HCT116 (cell line): ENCODE measurements at regions of chr17 and their contacts with region 1.

Region 1: DNA sequence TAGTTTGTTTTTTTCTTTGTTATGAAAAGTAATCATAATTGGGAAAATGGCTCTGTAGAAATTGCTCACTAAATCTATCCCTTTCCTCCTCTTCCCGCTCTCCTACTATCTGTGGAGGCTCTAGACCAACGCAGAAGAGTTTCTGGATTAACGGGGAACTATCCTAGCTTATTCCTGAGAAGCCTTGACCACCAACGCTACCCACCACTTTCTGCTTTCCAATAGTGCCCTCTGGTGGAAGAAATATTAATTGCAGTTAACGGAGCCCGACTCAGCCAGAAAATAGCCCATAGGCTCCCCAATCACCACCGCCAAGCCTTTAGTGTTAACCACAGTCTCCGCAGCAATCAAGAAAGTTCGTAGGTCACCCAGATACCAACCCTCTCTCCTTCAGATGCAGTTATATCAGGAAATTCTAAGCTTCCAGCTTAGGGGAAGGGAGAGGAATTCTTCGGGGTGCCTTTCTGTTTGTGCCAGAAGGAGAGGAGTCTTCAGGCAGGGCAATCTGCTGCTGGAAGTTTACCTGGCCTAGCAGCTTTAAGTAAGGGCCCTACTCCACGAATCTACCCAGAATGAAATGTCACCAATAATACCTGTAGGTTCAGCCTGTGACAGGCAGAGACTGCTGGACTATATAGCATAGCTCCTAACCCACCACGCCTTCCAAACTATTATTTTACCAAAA is 23.0 kb upstream of the NSRP1 start:
- DNase-seq: peak; percentile 54
- ATAC-seq: peak; percentile 86
- H3K4me3 ChIP-seq: no peak overlapping the region
- H3K27ac ChIP-seq: no peak overlapping the region
- H3K4me1 ChIP-seq: peaks cover 0 to 32% of the 10 kb centered on the region in 2 experiments; a peak in 2 of 4 replicates
- H3K27me3 ChIP-seq: no peaks in the 10 kb centered on the region
- CTCF ChIP-seq: peak; percentile 62 to 91 (median 85)
- POLR2A ChIP-seq: no peak
- RAD21 ChIP-seq: peak; percentile 93

Region 2: GRCh38 chr17:29237476-29238132 is 856.0 kb before region 1 on chr17:
- CTCF ChIA-PET with region 1: no interaction called
- POLR2A ChIA-PET with region 1: no interaction called
- RAD21 ChIA-PET with region 1: no interaction called
- intact Hi-C with region 1: no loop called
- DNase-seq: peak; percentile 51
- ATAC-seq: no peak
- H3K4me3 ChIP-seq: no peak overlapping the region
- H3K27ac ChIP-seq: no peak overlapping the region
- H3K4me1 ChIP-seq: peaks cover 21 to 35% of the 10 kb centered on the region in 2 experiments
- H3K27me3 ChIP-seq: no peaks in the 10 kb centered on the region
- CTCF ChIP-seq: no peak
- POLR2A ChIP-seq: no peak
- RAD21 ChIP-seq: no peak

Region 3: GRCh38 chr17:29579866-29580771 is 513.5 kb before region 1 on chr17:
- CTCF ChIA-PET with region 1: interaction called, 14 read pairs
- POLR2A ChIA-PET with region 1: no interaction called
- RAD21 ChIA-PET with region 1: no interaction called
- intact Hi-C with region 1: no loop called
- DNase-seq: peak; percentile 67
- ATAC-seq: peak; percentile 97
- H3K4me3 ChIP-seq: no peak overlapping the region
- H3K27ac ChIP-seq: peak overlapping the region; percentile 37
- H3K4me1 ChIP-seq: peaks cover 5 to 26% of the 10 kb centered on the region in 2 experiments; a peak in 3 of 4 replicates
- H3K27me3 ChIP-seq: no peaks in the 10 kb centered on the region
- CTCF ChIP-seq: peak; percentile 88
- POLR2A ChIP-seq: no peak
- RAD21 ChIP-seq: peak; percentile 95

Region 4: DNA sequence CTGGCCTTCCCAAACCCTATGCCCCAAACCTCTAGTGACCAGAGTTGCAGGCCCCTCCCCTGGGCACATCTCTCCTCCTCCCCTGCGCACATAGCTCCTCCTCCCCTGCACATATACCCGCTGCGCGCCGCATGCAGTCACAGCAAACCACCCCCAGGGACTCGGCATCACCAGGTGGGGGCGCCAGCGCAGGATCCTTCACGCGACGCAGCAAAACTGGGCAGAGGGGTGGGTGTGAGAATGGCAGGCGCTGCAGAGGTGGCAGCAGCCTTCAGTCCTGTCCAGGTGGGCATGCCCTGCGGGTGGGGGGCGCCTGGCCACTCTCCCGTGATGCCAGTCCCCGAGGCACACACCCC is 476.5 kb before region 1 on chr17:
- CTCF ChIA-PET with region 1: interaction called, 61 read pairs
- POLR2A ChIA-PET with region 1: interaction called, 3 read pairs
- RAD21 ChIA-PET with region 1: no interaction called
- intact Hi-C with region 1: loop called (anchors 1 kb)
- DNase-seq: peak; percentile 67
- ATAC-seq: peak; percentile 81
- H3K4me3 ChIP-seq: peak overlapping the region; percentile 36 to 50
- H3K27ac ChIP-seq: peak overlapping the region; percentile 64; the same call in 1 of the 2 replicates
- H3K4me1 ChIP-seq: peaks cover 48 to 64% of the 10 kb centered on the region in 2 experiments
- H3K27me3 ChIP-seq: no peaks in the 10 kb centered on the region
- CTCF ChIP-seq: peak; percentile 62 to 91 (median 84)
- POLR2A ChIP-seq: peak; percentile 30
- RAD21 ChIP-seq: peak; percentile 39; the same call in 1 of the 2 replicates

Region 5: GRCh38 chr17:29807520-29808351 is 285.9 kb before region 1 on chr17:
- CTCF ChIA-PET with region 1: interaction called, 54 read pairs
- POLR2A ChIA-PET with region 1: no interaction called
- RAD21 ChIA-PET with region 1: interaction called in 1 of 2 experiments, 5 read pairs
- intact Hi-C with region 1: loop called (anchors 2 kb)
- DNase-seq: peak; percentile 18
- ATAC-seq: peak; percentile 85
- H3K4me3 ChIP-seq: no peak overlapping the region
- H3K27ac ChIP-seq: no peak overlapping the region
- H3K4me1 ChIP-seq: peaks cover 0 to 6% of the 10 kb centered on the region in 2 experiments; a peak in 1 of 4 replicates
- H3K27me3 ChIP-seq: no peaks in the 10 kb centered on the region
- CTCF ChIP-seq: peak; percentile 67 to 79 (median 77)
- POLR2A ChIP-seq: no peak
- RAD21 ChIP-seq: peak; percentile 83

Region 6: GRCh38 chr17:30031214-30031869 is 62.3 kb before region 1 on chr17:
- CTCF ChIA-PET with region 1: interaction called, 79 read pairs
- POLR2A ChIA-PET with region 1: interaction called, 3 read pairs
- RAD21 ChIA-PET with region 1: interaction called, 4 to 7 read pairs
- intact Hi-C with region 1: loop called (anchors 1 kb)
- DNase-seq: no peak
- ATAC-seq: no peak
- H3K4me3 ChIP-seq: no peak overlapping the region
- H3K27ac ChIP-seq: no peak overlapping the region
- H3K4me1 ChIP-seq: no peaks in the 10 kb centered on the region
- H3K27me3 ChIP-seq: no peaks in the 10 kb centered on the region
- CTCF ChIP-seq: no peak
- POLR2A ChIP-seq: no peak
- RAD21 ChIP-seq: no peak